ENCODE measurements at regions of chrX and their contacts with region 1.

Region 1: GRCh38 chrX:19554786-19555185 is 39.5 kb upstream of the MAP3K15 start:
- DNase-seq: peak; percentile 55
- H3K4me3 Mint-ChIP-seq: no peak overlapping the region
- H3K27ac Mint-ChIP-seq: peak overlapping the region; percentile 81
- H3K4me1 Mint-ChIP-seq: peaks cover 58% of the 10 kb centered on the region
- H3K27me3 Mint-ChIP-seq: no peaks in the 10 kb centered on the region

Region 2: DNA sequence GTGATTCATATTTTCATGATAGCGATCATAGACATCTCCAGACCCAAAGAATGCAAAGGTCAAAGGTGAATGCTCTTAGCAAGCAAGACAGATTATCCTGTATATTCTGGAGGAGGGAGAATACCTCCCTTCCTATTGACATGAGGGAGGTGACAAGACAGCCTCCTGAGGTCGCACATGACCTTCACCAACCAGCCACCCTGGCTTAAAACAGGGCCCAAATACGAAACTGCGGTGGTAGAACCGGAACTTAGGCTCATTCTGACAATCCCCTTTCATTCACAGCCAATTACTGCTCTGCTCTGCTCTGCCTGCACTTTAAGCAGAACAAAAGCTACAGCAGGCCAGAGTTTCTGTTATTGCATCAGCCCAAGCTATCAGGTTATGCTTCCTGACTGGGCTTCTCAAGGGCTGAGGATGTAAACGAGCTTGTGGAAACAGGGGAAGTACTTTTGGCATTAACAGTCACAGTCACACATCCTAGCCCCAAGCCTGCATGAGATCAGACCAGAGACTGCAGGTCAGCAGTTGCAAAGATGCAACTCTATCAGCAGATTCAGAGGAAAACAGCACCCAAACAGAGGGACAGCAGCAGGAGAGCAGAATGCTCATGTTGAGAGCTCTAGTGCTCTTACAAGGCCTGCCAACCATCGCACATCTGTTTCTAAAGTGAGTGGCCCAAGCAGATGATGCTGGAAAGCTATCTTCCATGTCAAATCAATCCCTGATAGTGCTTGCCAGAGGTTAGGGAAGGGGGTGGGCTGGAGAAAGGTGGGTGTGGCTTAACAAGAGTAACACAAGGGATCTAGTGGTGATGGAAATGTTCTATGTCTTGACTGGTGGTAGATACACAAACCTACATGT is 11.8 kb after region 1 on chrX:
- CTCF ChIA-PET with region 1: interaction called, 3 read pairs
- intact Hi-C with region 1: loop called (anchors 1 kb)
- DNase-seq: peak; percentile 53
- H3K4me3 Mint-ChIP-seq: peak overlapping the region; percentile 26
- H3K27ac Mint-ChIP-seq: peak overlapping the region; percentile 90
- H3K4me1 Mint-ChIP-seq: peaks cover 49% of the 10 kb centered on the region
- H3K27me3 Mint-ChIP-seq: no peaks in the 10 kb centered on the region

Region 3: DNA sequence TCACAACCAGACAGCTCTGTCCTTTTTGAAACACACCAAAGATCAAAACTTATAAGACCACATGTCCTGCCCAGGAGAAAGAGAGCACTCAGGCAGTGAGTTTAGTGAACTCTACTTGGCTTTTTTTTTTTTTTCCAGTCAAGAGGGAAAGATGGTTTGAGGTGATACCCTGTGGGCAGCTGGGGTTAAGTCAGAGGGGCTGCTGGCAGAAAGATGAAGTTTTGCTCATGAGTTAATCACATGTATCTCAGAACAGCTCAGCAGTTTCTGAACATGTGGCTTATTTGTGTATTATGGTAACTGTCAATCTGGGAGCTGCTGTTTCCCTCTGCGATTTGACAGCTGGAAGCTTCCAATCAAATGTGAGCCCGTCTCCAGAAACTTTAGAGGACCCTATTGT is 16.9 kb after region 1 on chrX:
- CTCF ChIA-PET with region 1: interaction called, 3 read pairs
- intact Hi-C with region 1: loop called (anchors 1 kb)
- DNase-seq: peak; percentile 45
- H3K4me3 Mint-ChIP-seq: no peak overlapping the region
- H3K27ac Mint-ChIP-seq: peak overlapping the region; percentile 68
- H3K4me1 Mint-ChIP-seq: peaks cover 28% of the 10 kb centered on the region
- H3K27me3 Mint-ChIP-seq: no peaks in the 10 kb centered on the region

Region 4: DNA sequence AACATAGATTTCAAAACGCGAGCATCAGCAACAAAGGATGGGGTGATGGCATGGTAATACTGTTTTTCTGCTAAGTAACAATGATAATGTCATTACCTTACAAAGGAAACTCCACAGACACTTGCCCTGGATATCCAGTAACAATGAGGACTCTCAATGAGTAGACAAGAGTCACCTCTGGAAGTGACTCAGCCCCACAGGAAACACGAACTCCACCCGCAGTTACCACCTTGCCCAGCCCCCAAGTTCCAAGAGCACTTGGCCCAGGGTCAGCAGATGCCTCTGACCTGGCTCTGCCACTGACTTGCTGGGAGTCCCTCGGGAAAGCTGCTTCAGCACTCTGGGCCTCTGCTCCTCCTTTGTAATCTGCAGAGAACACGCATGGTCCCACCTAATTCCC is 70.8 kb after region 1 on chrX:
- CTCF ChIA-PET with region 1: no interaction called
- intact Hi-C with region 1: loop called (anchors 2 kb)
- DNase-seq: peak; percentile 68
- H3K4me3 Mint-ChIP-seq: no peak overlapping the region
- H3K27ac Mint-ChIP-seq: peak overlapping the region; percentile 90
- H3K4me1 Mint-ChIP-seq: peaks cover 65% of the 10 kb centered on the region
- H3K27me3 Mint-ChIP-seq: no peaks in the 10 kb centered on the region

Region 5: DNA sequence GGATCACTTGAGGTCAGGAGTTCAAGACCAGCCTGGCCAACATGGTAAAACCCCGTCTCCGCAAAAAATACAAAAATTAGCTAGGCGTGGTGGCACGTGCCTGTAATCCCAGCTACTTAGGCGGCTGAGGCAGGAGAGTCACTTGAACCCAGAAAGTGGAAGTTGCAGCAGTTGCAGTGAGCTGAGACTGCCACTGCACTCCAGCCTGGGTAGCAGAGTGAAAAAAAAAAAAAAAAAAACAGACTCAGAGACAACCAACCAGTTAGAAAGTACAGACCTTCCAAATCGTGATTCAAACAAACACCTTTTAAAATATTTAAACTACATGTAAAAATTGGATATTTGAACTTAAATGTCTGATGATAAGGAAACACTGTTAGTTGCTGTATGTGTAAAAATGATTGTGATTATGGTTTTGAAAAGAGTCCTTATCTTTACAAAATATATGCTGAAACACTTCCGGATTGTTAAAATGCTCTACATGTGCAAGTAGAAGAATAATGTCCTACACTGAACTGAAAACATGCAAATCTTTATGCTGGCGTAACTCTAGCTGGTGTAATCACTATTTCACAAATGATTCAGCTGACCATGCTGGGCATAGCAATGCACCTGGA is 294.8 kb after region 1 on chrX:
- CTCF ChIA-PET with region 1: no interaction called
- intact Hi-C with region 1: no loop called
- DNase-seq: no peak
- H3K4me3 Mint-ChIP-seq: peak overlapping the region; percentile 11
- H3K27ac Mint-ChIP-seq: peak overlapping the region; percentile 73
- H3K4me1 Mint-ChIP-seq: peaks cover 42% of the 10 kb centered on the region
- H3K27me3 Mint-ChIP-seq: no peaks in the 10 kb centered on the region